Natural killer cell (primary cell): ENCODE measurements at regions of chr16 and their contacts with region 1.

Region 1: GRCh38 chr16:50266337-50267091 is at the start of gene ADCY7:
- DNase-seq: peak; percentile 82 to 87
- ATAC-seq: peak; percentile 79 to 86 (median 85)
- H3K4me3 ChIP-seq: peak within 1 kb of the TSS; percentile 75
- H3K4me3 Mint-ChIP-seq: peak within 1 kb of the TSS; percentile 88
- H3K27ac ChIP-seq: peak within 1 kb of the TSS; percentile 72
- H3K27ac Mint-ChIP-seq: peak within 1 kb of the TSS; percentile 91 to 99
- H3K4me1 ChIP-seq: peaks cover 87% of the 10 kb centered on the region
- H3K4me1 Mint-ChIP-seq: peaks cover 86 to 95% of the 10 kb centered on the region in 2 donors
- H3K27me3 ChIP-seq: no peaks in the 10 kb centered on the region
- H3K27me3 Mint-ChIP-seq: no peaks in the 10 kb centered on the region
- CTCF ChIP-seq: no peak
- total RNA-seq, gene ADCY7: 479 to 591 (median 512) TPM

Region 2: DNA sequence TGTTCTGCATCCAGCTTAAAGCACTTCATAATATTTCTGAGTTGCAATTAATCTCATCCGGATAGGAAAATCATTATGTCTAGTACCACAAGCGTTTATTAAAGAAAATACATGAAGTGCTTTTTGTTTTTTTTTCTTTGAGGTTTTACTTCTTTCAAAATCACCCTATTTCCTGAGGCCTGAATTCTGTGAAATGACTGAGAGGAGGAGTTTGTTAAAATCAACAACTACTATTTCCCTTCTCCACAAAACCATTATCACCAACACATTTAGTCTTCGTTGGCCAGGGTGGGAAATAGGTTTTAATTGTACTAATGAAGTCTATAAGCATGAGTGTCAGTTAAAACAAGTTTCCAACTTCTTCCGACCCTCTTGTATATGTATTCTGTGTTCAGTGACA is 50.8 kb before region 1 on chr16:
- intact Hi-C with region 1: loop called (anchors 5 kb)
- DNase-seq: no peak
- ATAC-seq: peak in 2 of 3 donors; percentile 33 to 63
- H3K4me3 ChIP-seq: peak overlapping the region; percentile 24
- H3K4me3 Mint-ChIP-seq: peak overlapping the region; percentile 82
- H3K27ac ChIP-seq: peak overlapping the region; percentile 57
- H3K27ac Mint-ChIP-seq: peak overlapping the region; percentile 89 to 91
- H3K4me1 ChIP-seq: peaks cover 21% of the 10 kb centered on the region
- H3K4me1 Mint-ChIP-seq: peaks cover 33 to 38% of the 10 kb centered on the region in 2 donors
- H3K27me3 ChIP-seq: no peaks in the 10 kb centered on the region
- H3K27me3 Mint-ChIP-seq: no peaks in the 10 kb centered on the region
- CTCF ChIP-seq: no peak

Region 3: GRCh38 chr16:50253514-50253910 is 13.0 kb before region 1 on chr16:
- intact Hi-C with region 1: loop called (anchors 1 kb)
- DNase-seq: no peak
- ATAC-seq: peak in 1 of 3 donors; percentile 34
- H3K4me3 ChIP-seq: no peak overlapping the region
- H3K4me3 Mint-ChIP-seq: peak overlapping the region; percentile 9
- H3K27ac ChIP-seq: no peak overlapping the region
- H3K27ac Mint-ChIP-seq: peak overlapping the region; percentile 68 to 71
- H3K4me1 ChIP-seq: no peaks in the 10 kb centered on the region
- H3K4me1 Mint-ChIP-seq: peaks cover 24 to 38% of the 10 kb centered on the region in 2 donors
- H3K27me3 ChIP-seq: no peaks in the 10 kb centered on the region
- H3K27me3 Mint-ChIP-seq: no peaks in the 10 kb centered on the region
- CTCF ChIP-seq: no peak